ENCODE measurements at regions of chr22 and their contacts with region 1.

Region 1: DNA sequence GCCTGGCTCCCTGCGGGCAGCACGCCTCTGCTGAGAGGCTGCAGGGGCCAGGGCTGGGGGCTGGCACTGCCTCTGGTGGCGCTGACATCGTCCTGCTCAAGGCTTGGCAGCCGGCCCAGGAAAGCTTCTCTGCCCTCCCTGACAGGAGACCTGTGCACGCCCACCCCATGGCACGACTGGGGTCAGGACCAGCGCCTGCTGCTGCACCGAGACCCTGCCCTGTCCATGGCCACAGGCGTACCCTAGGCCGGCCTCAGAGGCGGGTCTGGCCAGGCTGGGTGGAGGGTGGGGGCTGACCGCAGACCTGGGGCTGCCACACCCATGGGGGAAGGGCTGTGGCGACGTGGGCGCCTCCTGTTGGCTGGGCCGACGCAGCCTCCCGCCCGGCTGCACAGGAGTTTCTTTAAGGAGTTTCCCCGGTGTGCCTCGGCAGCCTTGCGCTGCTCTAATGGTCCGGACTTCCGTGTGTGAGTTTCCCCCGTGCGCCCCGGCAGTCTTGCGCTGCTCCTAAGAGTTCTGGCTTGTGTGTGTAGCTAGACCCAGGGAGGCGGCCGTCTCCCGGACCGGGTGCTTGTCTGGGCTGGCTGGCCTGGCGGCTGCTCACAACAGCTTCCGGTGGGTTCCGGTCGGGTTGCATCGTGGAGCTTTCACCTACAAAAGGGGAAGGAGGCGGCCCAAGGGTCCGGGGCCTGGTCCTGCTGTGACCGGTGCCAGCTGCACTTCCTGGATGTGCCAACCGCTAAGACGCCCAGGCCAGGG is 4.6 kb downstream of the TRABD start:
- DNase-seq: peak; percentile 87
- ATAC-seq: peak; percentile 53
- H3K4me3 Mint-ChIP-seq: peak overlapping the region; percentile 95
- H3K27ac Mint-ChIP-seq: peak overlapping the region; percentile 98
- H3K4me1 Mint-ChIP-seq: peaks cover 32% of the 10 kb centered on the region
- H3K27me3 Mint-ChIP-seq: no peaks in the 10 kb centered on the region

Region 2: DNA sequence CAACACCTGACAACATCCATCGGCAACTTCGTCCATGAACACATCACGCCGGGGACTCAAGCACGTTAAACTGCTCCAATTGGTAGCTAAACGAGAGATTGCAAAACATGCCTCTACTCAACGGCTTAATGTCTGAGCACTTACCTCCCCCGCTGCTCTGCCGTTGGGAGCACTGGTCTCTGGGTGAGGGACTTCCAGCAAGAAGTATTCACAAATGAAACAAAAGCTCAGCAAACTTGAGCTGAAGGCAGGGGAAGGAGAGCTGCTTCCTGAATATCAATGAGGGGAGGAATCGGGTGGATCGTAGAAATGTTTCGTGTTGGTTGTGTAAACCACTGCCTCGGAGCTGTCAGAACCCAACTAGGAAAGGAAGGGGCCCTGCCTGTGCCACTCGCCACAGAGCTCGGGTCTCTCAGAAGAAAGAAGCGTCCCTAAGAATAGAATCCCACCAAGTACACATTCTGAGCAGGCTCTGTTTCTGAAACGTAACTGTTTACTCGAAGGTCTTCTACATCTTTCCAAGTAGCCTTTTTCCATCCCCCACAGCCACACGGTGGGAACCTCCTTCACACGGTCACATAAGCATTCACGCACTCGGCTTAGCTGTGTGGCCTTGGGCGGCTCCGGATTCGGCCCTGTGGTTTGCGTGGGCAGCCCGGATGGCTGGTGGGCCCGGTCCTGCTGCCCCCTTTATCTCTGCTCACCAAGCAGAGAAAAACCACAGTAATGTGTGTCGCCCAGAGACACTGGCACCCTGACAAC is 105.0 kb before region 1 on chr22 and contains the start of gene MLC1:
- POLR2A ChIA-PET with region 1: interaction called, 11 read pairs
- DNase-seq: peak; percentile 52
- ATAC-seq: no peak
- H3K4me3 Mint-ChIP-seq: no peak within 1 kb of the TSS
- H3K27ac Mint-ChIP-seq: no peak within 1 kb of the TSS
- H3K4me1 Mint-ChIP-seq: peaks cover 7% of the 10 kb centered on the region
- H3K27me3 Mint-ChIP-seq: peaks cover 4% of the 10 kb centered on the region
- total RNA-seq, gene MLC1: 4.2 to 4.9 TPM

Region 3: DNA sequence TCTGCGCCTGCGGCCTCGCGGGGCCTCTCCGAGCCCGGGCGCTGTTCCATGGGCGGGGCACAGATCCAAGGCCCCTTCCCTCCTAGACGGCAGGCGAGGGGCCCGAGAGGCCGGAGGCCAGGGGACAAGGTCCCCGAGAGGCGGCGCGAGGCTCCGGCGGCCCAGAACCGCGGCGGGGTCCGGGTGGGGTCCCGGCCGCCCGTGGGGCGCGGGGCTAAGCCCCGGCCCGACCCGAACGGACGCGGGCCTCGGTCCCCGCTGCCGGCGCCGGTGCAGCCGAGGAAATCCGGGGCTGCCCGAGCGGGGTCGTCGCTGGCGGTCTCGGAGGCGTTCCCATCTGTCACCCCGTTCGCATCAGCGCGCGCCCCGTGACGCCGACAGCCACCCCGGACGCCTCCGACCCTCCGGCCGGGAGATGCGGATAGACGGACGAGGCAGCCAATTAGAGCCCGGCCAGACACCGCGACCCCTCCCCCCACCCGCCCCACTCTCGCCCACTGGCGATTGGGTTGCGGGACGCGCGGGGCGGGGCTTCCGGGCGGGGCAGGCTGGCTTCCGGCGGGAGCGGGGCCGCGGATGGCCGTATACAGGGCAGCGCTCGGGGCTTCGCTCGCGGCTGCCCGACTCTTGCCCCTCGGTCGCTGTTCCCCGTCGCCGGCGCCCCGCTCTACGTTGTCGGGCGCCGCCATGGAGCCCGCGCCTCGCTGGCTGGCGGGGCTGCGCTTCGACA is 10.3 kb after region 1 on chr22 and contains the start of gene SELENOO:
- POLR2A ChIA-PET with region 1: interaction called, 23 read pairs
- DNase-seq: peak; percentile 93
- ATAC-seq: peak; percentile 89
- H3K4me3 Mint-ChIP-seq: peak within 1 kb of the TSS; percentile 88
- H3K27ac Mint-ChIP-seq: peak within 1 kb of the TSS; percentile 72
- H3K4me1 Mint-ChIP-seq: peaks cover 17% of the 10 kb centered on the region
- H3K27me3 Mint-ChIP-seq: no peaks in the 10 kb centered on the region
- total RNA-seq, gene SELENOO: 27.9 to 33.3 TPM

Region 4: DNA sequence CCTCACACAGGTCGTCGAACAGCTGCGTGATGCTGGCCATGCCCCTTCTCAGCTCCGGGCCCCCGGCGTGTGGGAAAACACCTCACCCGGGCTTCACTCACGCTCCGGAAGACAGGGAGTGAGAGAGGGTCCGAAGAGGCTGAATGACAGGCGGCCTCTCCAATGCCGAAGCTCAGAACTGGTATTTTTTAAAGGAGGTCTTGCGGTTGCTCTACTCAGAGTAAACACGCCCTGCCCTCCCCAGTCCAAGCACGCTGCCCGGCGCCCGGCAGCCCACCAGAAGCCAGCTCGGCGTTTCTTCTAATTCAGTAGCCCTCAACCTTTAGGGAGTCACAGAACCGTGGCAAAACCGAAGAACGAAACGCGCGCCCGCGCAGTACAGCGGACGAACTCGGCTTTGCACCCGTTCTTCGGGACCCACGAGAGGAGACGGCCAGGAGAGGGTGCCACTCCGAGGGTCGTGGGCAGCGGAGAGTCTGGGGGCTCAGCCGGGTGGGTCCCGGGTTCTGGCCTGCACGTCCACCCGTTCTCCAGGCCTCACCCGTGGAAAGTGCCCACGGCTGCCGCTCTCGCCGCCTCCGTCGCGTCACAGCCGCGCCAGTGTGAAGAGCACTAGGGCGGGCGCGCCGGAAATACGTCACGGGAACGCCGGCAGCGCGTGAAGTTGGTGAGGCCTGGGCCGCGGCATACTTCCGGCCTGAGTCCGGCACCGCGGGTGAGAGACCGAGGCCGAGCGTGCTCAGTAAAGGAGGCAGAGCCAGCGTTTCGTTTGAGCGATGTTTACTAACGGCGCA is 54.3 kb after region 1 on chr22 and contains the start of gene TUBGCP6:
- POLR2A ChIA-PET with region 1: interaction called, 11 read pairs
- DNase-seq: peak; percentile 97
- ATAC-seq: peak; percentile 81
- H3K4me3 Mint-ChIP-seq: peak within 1 kb of the TSS; percentile 99
- H3K27ac Mint-ChIP-seq: peak within 1 kb of the TSS; percentile 99
- H3K4me1 Mint-ChIP-seq: peaks cover 26% of the 10 kb centered on the region
- H3K27me3 Mint-ChIP-seq: no peaks in the 10 kb centered on the region
- total RNA-seq, gene TUBGCP6: 92.2 to 94.5 TPM

Measured in activated naive CD8-positive, alpha-beta T cell treated with anti-CD3 and anti-CD28 coated beads, Interleukin-2, amount 10 ng/mL, durations not matched to agents 7 days and 5 days (primary cell).